Prostate gland (tissue), 2 donors: ENCODE measurements at regions of chr17 and their contacts with region 1.

Region 1: DNA sequence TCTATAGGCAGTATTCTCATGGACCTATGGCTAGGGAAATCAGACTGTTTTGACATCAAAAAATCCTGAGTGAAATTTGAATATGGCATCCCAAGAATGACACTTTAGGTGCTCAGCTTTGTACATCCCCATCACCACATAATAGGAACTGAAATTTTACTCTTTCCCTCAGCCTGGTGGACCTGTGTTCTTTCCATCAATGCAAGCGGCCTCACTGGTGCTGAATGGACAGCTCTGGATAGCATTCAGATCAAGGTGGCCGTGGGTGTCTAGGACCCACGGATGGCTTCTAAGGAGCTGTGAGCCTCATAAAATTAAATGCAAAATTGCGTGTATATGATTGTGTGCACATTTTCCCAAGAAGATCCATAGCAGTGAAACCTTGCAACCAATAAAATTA is 152.6 kb downstream of the MAP2K6 start:
- DNase-seq: no peak
- H3K4me3 ChIP-seq: no peak overlapping the region
- H3K27ac ChIP-seq: no peak overlapping the region
- H3K4me1 ChIP-seq: no peaks in the 10 kb centered on the region
- H3K27me3 ChIP-seq: no peaks in the 10 kb centered on the region
- CTCF ChIP-seq: no peak
- POLR2A ChIP-seq: no peak

Region 2: GRCh38 chr17:69672924-69673323 is 105.8 kb after region 1 on chr17:
- intact Hi-C with region 1: no loop called
- DNase-seq: no peak
- H3K4me3 ChIP-seq: no peak overlapping the region
- H3K27ac ChIP-seq: no peak overlapping the region
- H3K4me1 ChIP-seq: no peaks in the 10 kb centered on the region
- H3K27me3 ChIP-seq: no peaks in the 10 kb centered on the region
- CTCF ChIP-seq: no peak
- POLR2A ChIP-seq: no peak

Region 3: DNA sequence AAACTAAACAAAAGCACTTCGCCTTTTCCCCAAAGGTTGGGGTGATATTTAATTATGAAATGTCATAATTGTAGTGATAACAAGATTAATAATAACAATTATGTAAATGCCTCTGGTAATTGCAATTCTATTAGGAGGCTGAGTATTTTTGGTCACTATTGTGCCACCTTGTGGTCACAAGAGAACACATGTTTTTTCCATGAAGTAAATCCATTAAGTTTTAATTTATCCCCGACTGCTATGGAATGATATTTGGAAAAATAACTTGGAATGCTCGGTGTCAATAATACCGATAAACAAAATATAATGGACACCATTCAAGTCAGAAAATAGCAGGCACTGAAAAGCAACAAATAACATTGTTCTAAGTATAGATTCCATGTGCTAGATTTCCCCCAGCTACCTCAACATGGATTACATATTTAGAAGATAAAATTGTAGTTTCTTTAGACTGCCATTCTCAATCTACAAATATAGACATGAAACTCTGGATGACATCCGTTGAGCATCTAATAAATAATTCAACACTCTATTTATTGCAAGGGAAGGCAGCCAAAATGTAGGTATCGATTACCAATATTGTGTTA is 577.2 kb after region 1 on chr17:
- intact Hi-C with region 1: loop called (anchors 5 kb)
- DNase-seq: no peak
- H3K4me3 ChIP-seq: no peak overlapping the region
- H3K27ac ChIP-seq: no peak overlapping the region
- H3K4me1 ChIP-seq: no peaks in the 10 kb centered on the region
- H3K27me3 ChIP-seq: no peaks in the 10 kb centered on the region
- CTCF ChIP-seq: peak; percentile 58 to 84 (median 80)
- POLR2A ChIP-seq: no peak

Region 4: GRCh38 chr17:70552230-70552981 is 985.3 kb after region 1 on chr17:
- intact Hi-C with region 1: loop called (anchors 5 kb)
- DNase-seq: peak; percentile 10
- H3K4me3 ChIP-seq: no peak overlapping the region
- H3K27ac ChIP-seq: no peak overlapping the region
- H3K4me1 ChIP-seq: no peaks in the 10 kb centered on the region
- H3K27me3 ChIP-seq: no peaks in the 10 kb centered on the region
- CTCF ChIP-seq: peak in 3 of 4 experiments; percentile 63 to 74 (median 64)
- POLR2A ChIP-seq: no peak

Region 5: GRCh38 chr17:70622368-70623260 is 1055.5 kb after region 1 on chr17:
- intact Hi-C with region 1: loop called (anchors 10 kb)
- DNase-seq: no peak
- H3K4me3 ChIP-seq: no peak overlapping the region
- H3K27ac ChIP-seq: no peak overlapping the region
- H3K4me1 ChIP-seq: no peaks in the 10 kb centered on the region
- H3K27me3 ChIP-seq: no peaks in the 10 kb centered on the region
- CTCF ChIP-seq: peak in 1 of 4 experiments; percentile 16
- POLR2A ChIP-seq: no peak